ENCODE measurements at regions of chr14 and their contacts with region 1.

Region 1: DNA sequence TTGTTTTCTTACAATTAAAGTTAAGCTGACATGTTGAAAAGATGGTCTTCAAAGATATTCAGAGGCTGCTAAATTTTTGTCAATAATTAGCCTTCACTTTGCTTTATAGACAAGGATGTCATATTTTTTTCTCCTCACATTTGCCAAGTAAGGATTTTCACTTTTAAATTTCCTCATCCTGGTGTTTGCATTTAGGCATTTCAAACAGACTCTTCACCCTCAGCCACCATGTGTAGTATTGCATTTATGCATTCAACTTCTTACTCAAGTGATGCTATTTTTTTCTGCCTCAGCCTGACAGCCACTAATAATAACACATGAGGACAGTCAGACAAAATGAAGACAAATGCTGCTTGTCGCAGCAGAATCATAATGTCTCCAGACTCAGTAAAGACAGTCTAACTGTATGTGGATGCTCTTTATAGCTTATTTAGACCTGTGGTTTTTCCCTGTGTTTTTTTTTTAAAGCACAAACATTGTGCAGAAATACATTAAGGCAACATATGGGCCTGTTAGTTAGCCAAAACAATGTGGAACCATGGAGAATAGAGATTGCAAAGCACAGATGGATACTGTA is 481.5 kb downstream of the NPAS3 start:
- DNase-seq: no peak
- H3K4me3 ChIP-seq: no peak overlapping the region
- H3K27ac ChIP-seq: no peak overlapping the region
- H3K4me1 ChIP-seq: no peaks in the 10 kb centered on the region
- H3K27me3 ChIP-seq: no peaks in the 10 kb centered on the region
- CTCF ChIP-seq: no peak

Region 2: DNA sequence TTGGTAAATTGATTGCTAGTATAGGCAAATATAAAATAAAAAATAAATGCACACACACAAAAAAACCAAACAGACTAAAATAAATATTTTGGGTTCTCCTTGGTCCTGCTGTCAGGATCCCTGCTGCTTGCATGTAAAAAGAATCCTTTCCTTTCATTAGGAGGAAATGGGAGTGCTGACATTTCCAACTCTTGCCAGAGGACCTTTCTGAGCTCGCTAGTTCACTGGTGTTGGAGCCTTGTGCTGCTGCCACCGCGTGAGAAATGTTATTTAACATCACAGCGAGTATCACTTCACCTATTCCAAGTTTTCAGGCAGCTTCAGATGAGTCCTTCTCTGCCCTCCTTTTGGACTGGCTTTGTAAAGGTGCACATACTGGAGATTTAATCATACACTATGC is 122.6 kb before region 1 on chr14:
- CTCF ChIA-PET with region 1: no interaction called
- POLR2A ChIA-PET with region 1: no interaction called
- intact Hi-C with region 1: no loop called
- DNase-seq: peak; percentile 27
- H3K4me3 ChIP-seq: no peak overlapping the region
- H3K27ac ChIP-seq: no peak overlapping the region
- H3K4me1 ChIP-seq: peaks cover 4% of the 10 kb centered on the region
- H3K27me3 ChIP-seq: no peaks in the 10 kb centered on the region
- CTCF ChIP-seq: no peak

Region 3: DNA sequence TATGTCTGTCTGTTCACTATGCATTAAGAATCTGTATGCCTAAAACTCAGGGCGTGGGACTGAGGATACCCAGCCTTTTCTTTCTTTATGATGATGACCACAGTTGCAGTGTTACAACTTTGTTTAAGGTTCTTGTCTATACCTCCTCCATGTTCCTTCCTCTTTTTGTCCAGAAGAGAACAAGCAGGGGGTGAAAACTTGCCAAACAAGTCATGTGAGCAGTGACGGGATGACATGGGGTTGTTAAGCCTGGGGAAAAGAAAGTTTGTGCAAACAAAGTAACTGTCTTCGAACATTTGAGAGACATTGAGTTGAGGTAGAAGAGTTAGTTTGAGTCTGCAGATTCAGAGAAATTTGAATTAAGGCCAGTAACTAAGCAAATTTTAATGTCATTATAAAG is 24.0 kb after region 1 on chr14:
- CTCF ChIA-PET with region 1: no interaction called
- POLR2A ChIA-PET with region 1: no interaction called
- intact Hi-C with region 1: no loop called
- DNase-seq: no peak
- H3K4me3 ChIP-seq: no peak overlapping the region
- H3K27ac ChIP-seq: no peak overlapping the region
- H3K4me1 ChIP-seq: no peaks in the 10 kb centered on the region
- H3K27me3 ChIP-seq: no peaks in the 10 kb centered on the region
- CTCF ChIP-seq: no peak

Region 4: DNA sequence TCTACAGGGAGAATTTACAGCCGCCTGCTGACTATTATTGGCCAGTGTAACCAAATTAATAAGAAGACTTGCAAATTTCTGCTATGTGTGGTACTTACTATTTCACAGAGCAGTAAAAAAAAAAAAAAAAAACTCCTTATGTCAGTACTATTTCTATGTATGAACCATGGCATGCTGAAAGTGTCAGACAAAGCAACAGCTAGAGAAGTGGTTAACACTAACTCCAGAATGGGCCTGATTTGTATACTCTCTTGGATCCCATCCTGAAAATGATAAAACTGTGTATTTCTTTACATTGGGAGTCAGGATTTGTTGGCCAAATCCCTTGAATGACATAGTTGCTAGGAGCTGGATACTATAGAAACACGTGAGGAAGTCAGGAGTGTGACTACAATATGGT is 114.0 kb after region 1 on chr14:
- CTCF ChIA-PET with region 1: no interaction called
- POLR2A ChIA-PET with region 1: interaction called, 12 read pairs
- intact Hi-C with region 1: no loop called
- DNase-seq: no peak
- H3K4me3 ChIP-seq: no peak overlapping the region
- H3K27ac ChIP-seq: no peak overlapping the region
- H3K4me1 ChIP-seq: no peaks in the 10 kb centered on the region
- H3K27me3 ChIP-seq: no peaks in the 10 kb centered on the region
- CTCF ChIP-seq: no peak

Region 5: DNA sequence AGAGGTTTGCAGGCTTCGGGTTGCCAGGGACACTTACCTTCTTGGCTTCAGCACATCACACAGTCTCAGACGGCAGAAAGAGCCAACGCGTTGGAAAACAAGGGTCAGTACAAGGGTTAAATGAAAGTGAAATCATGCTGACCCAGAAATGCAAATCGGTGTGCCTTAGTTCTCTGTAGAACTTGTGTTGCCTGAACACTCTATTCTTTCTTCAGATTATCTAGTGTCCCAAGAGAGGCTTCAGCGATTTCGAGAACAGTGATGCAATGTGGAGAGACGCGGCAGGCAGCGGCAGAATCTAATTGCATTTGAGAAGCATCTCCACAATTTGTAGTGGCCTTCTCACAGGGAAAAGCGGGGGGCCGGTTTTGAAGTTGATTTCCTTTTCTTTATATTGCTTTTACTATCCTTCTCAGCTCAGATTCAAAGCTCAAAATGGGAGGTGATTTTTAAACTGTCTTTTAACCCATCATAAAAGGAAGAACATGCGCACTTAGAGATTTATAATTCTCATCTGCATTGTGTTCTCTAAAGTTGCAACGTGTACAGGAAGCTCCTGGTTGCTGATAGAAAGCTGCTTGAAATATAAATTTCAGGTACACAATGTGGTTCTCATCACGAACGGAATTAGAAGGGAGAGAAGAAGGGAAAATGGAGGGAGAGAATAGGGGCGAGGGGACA is 598.6 kb after region 1 on chr14:
- CTCF ChIA-PET with region 1: no interaction called
- POLR2A ChIA-PET with region 1: no interaction called
- intact Hi-C with region 1: no loop called
- DNase-seq: peak; percentile 59
- H3K4me3 ChIP-seq: peak overlapping the region; percentile 23
- H3K27ac ChIP-seq: no peak overlapping the region
- H3K4me1 ChIP-seq: peaks cover 14% of the 10 kb centered on the region
- H3K27me3 ChIP-seq: peaks cover 9% of the 10 kb centered on the region
- CTCF ChIP-seq: no peak

Measured in A673 (cell line).